A673 (cell line): ENCODE measurements at regions of chr3 and their contacts with region 1.

Region 1: GRCh38 chr3:138479438-138479863 is 45.0 kb downstream of the ESYT3 start:
- DNase-seq: peak; percentile 71
- H3K4me3 ChIP-seq: no peak overlapping the region
- H3K27ac ChIP-seq: no peak overlapping the region
- H3K4me1 ChIP-seq: no peaks in the 10 kb centered on the region
- H3K27me3 ChIP-seq: no peaks in the 10 kb centered on the region
- CTCF ChIP-seq: peak; percentile 92

Region 2: DNA sequence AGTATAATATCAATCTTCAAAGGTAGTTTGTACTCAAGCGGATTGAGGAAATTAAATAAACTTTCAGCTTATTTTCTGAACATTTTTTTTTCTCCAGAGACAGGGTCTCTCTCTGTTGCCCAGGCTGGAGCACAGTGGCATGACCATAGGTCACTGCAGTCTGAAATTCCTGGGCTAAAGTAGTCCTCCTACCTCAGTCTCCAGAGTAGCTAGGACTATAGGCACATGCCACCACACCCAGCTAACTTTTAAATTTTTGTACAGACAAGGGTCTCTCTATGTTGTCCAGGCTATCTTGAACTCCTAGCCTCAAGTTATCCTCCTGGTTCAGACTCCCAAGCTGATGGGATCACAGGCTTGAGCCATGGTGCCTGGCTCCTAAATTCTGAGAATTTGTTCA is 226.2 kb after region 1 on chr3:
- CTCF ChIA-PET with region 1: no interaction called
- POLR2A ChIA-PET with region 1: no interaction called
- intact Hi-C with region 1: loop called (anchors 10 kb)
- DNase-seq: no peak
- H3K4me3 ChIP-seq: no peak overlapping the region
- H3K27ac ChIP-seq: no peak overlapping the region
- H3K4me1 ChIP-seq: no peaks in the 10 kb centered on the region
- H3K27me3 ChIP-seq: no peaks in the 10 kb centered on the region
- CTCF ChIP-seq: no peak